ENCODE measurements at regions of chr1 and their contacts with region 1.

Region 1: DNA sequence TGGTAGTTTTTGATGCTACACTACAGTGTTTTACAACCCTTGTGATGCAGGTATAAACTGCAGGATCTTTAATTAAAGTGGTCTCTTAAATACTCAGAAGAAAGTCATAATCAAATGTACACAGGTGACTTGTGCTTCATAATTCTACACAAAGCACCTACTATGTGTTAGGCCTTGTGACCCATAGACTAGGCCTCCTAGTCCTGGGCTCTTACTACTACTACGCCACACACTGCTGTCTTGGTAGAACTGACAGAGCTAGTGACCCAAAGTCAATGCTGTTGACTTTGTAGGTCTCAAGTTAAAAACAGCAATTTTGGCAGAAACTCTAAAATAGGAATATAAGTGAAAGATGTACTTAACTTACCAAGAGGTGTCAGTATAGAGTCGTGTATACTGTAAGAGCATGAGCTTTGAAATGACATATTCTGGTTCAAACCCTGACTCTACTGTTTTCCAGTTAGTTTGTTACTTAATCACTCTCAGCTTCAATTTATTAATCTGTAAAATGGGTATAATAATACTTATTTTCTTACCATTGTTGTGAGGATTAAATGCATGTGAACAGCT is 48.6 kb upstream of the LMO4 start:
- DNase-seq: peak; percentile 10
- ATAC-seq: peak; percentile 65
- H3K4me3 ChIP-seq: no peak overlapping the region
- H3K27ac ChIP-seq: no peak overlapping the region
- H3K4me1 ChIP-seq: no peaks in the 10 kb centered on the region
- H3K27me3 ChIP-seq: no peaks in the 10 kb centered on the region
- CTCF ChIP-seq: peak in 2 of 3 experiments; percentile 15 to 46; a peak in 3 of 6 replicates
- POLR2A ChIP-seq: no peak
- RAD21 ChIP-seq: peak; percentile 48

Region 2: GRCh38 chr1:88595355-88596002 is 1315.4 kb after region 1 on chr1:
- CTCF ChIA-PET with region 1: no interaction called
- POLR2A ChIA-PET with region 1: no interaction called
- RAD21 ChIA-PET with region 1: no interaction called
- intact Hi-C with region 1: loop called (anchors 10 kb)
- DNase-seq: peak; percentile 62
- ATAC-seq: peak; percentile 80
- H3K4me3 ChIP-seq: no peak overlapping the region
- H3K27ac ChIP-seq: no peak overlapping the region
- H3K4me1 ChIP-seq: peaks cover 0 to 4% of the 10 kb centered on the region in 2 experiments; a peak in 1 of 4 replicates
- H3K27me3 ChIP-seq: no peaks in the 10 kb centered on the region
- CTCF ChIP-seq: peak; percentile 32 to 83 (median 59); a peak in 4 of 6 replicates
- POLR2A ChIP-seq: no peak
- RAD21 ChIP-seq: peak; percentile 72